ENCODE measurements at regions of chr10 and their contacts with region 1.

Region 1: DNA sequence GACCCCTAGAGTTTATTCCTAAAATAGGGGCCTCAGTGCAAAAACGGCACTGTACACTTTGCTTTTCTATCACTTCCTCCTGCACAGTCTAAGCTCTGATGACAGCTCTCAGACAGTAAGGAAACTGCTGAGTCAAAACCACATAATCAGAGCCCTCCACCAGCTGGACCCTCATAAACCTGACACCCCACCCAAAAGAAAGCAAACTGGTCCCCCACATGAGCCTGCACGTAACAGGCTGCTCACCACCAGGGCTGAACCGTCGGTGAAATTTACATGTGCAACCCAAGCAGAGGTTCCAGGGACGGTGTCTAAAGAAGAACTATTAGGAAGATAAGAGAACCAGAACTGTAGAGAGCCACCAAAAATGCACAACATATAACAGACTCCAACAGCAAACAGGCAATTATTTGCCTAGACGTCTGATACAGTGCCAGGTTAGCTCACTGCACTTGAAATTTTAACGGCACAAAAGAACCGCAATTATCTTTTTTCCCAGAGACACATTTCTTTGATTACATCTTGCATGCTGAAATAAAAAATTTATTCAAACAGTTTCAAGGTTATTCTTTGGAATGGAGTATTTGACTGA is 19.6 kb downstream of the SGMS1 start:
- DNase-seq: no peak
- ATAC-seq: peak; percentile 82
- H3K4me3 ChIP-seq: no peak overlapping the region
- H3K27ac ChIP-seq: 0 out of 2 replicates have a peak overlapping the region, but pooled peaks have one; percentile 12
- H3K4me1 ChIP-seq: peaks cover 24% of the 10 kb centered on the region; the same call in 1 of the 2 replicates
- H3K27me3 ChIP-seq: no peaks in the 10 kb centered on the region
- CTCF ChIP-seq: no peak
- EP300 ChIP-seq: no peak
- POLR2A ChIP-seq: no peak
- RAD21 ChIP-seq: no peak

Region 2: GRCh38 chr10:49568235-49568634 is 1035.9 kb before region 1 on chr10:
- CTCF ChIA-PET with region 1: no interaction called
- POLR2A ChIA-PET with region 1: no interaction called
- RAD21 ChIA-PET with region 1: no interaction called
- SMC1A ChIA-PET with region 1: no interaction called
- in situ Hi-C with region 1: no loop called
- intact Hi-C with region 1: no loop called
- DNase-seq: peak; percentile 9
- ATAC-seq: peak; percentile 74
- H3K4me3 ChIP-seq: 0 out of 2 replicates have a peak overlapping the region, but pooled peaks have one; percentile 29
- H3K27ac ChIP-seq: peak overlapping the region; percentile 56; the same call in 1 of the 2 replicates
- H3K4me1 ChIP-seq: no peaks in the 10 kb centered on the region
- H3K27me3 ChIP-seq: no peaks in the 10 kb centered on the region
- CTCF ChIP-seq: no peak
- EP300 ChIP-seq: no peak
- POLR2A ChIP-seq: no peak
- RAD21 ChIP-seq: no peak

Region 3: GRCh38 chr10:50552771-50553535 is 51.2 kb before region 1 on chr10:
- CTCF ChIA-PET with region 1: no interaction called
- POLR2A ChIA-PET with region 1: no interaction called
- RAD21 ChIA-PET with region 1: no interaction called
- SMC1A ChIA-PET with region 1: interaction called, 3 read pairs
- in situ Hi-C with region 1: no loop called
- intact Hi-C with region 1: loop called (anchors 5 kb)
- DNase-seq: no peak
- ATAC-seq: peak; percentile 82
- H3K4me3 ChIP-seq: no peak overlapping the region
- H3K27ac ChIP-seq: no peak overlapping the region
- H3K4me1 ChIP-seq: no peaks in the 10 kb centered on the region
- H3K27me3 ChIP-seq: no peaks in the 10 kb centered on the region
- CTCF ChIP-seq: peak; percentile 27 to 33 (median 29); a peak in 3 of 6 replicates
- EP300 ChIP-seq: no peak
- POLR2A ChIP-seq: no peak
- RAD21 ChIP-seq: peak; percentile 22; the same call in 1 of the 2 replicates

Region 4: GRCh38 chr10:50674469-50675254 is 70.5 kb after region 1 on chr10:
- CTCF ChIA-PET with region 1: no interaction called
- POLR2A ChIA-PET with region 1: no interaction called
- RAD21 ChIA-PET with region 1: no interaction called
- SMC1A ChIA-PET with region 1: no interaction called
- in situ Hi-C with region 1: no loop called
- intact Hi-C with region 1: no loop called
- DNase-seq: no peak
- ATAC-seq: no peak
- H3K4me3 ChIP-seq: no peak overlapping the region
- H3K27ac ChIP-seq: no peak overlapping the region
- H3K4me1 ChIP-seq: no peaks in the 10 kb centered on the region
- H3K27me3 ChIP-seq: no peaks in the 10 kb centered on the region
- CTCF ChIP-seq: no peak
- EP300 ChIP-seq: no peak
- POLR2A ChIP-seq: no peak
- RAD21 ChIP-seq: no peak